Activated CD8-positive, alpha-beta T cell treated with anti-CD3 and anti-CD28 coated beads for 36 hours (primary cell): ENCODE measurements at regions of chr6 and their contacts with region 1.

Region 1: GRCh38 chr6:42726485-42727086 is 4.2 kb upstream of the PRPH2 start:
- DNase-seq: peak; percentile 88
- ATAC-seq: peak; percentile 98
- H3K4me3 Mint-ChIP-seq: peak overlapping the region; percentile 75
- H3K27ac Mint-ChIP-seq: peak overlapping the region; percentile 96
- H3K4me1 Mint-ChIP-seq: peaks cover 16% of the 10 kb centered on the region
- H3K27me3 Mint-ChIP-seq: no peaks in the 10 kb centered on the region
- CTCF ChIP-seq: peak; percentile 94

Region 2: DNA sequence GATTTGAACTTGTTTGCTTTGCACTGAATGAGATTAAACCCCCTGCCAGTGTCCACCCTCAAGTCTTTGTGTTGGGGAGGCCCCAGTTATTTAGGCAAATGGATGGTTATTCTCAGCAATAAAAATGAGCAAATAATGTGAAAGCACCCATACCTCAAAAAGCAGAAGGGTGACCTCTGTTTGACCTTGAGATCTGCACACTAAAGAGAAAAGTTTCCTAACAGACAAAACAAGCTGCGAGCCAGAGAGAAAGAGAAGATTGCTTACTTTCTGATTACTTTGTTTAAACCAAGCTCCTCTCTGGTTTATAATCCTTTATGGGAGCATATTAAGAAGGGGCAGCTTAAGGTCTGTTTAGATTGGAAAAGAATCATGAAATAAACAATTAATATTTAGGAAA is 244.4 kb before region 1 on chr6:
- CTCF ChIA-PET with region 1: no interaction called
- POLR2A ChIA-PET with region 1: no interaction called
- intact Hi-C with region 1: no loop called
- DNase-seq: no peak
- ATAC-seq: no peak
- H3K4me3 Mint-ChIP-seq: no peak overlapping the region
- H3K27ac Mint-ChIP-seq: no peak overlapping the region
- H3K4me1 Mint-ChIP-seq: no peaks in the 10 kb centered on the region
- H3K27me3 Mint-ChIP-seq: no peaks in the 10 kb centered on the region
- CTCF ChIP-seq: no peak

Region 3: DNA sequence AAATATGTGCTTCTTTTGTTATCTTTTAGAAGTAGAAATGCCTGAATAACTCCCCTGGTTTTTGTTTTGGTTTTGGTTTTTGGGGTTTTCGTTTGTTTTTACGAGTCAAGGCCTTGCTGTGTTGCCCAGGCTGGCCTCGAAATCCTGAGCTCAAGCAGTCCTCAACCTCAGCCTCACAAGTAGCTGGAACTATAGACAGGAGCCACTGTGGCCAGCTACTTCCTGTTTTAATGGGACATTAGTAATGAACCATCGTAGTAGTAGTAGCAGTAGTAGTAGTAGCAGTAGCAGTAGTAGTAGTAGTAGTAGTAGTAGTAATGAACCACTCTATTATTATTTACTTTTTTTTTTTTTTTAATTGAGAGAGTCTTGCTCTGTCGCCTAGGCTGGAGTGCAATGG is 96.7 kb before region 1 on chr6:
- CTCF ChIA-PET with region 1: no interaction called
- POLR2A ChIA-PET with region 1: no interaction called
- intact Hi-C with region 1: no loop called
- DNase-seq: peak; percentile 5
- ATAC-seq: peak; percentile 20
- H3K4me3 Mint-ChIP-seq: no peak overlapping the region
- H3K27ac Mint-ChIP-seq: peak overlapping the region; percentile 36
- H3K4me1 Mint-ChIP-seq: peaks cover 4% of the 10 kb centered on the region
- H3K27me3 Mint-ChIP-seq: no peaks in the 10 kb centered on the region
- CTCF ChIP-seq: no peak

Region 4: DNA sequence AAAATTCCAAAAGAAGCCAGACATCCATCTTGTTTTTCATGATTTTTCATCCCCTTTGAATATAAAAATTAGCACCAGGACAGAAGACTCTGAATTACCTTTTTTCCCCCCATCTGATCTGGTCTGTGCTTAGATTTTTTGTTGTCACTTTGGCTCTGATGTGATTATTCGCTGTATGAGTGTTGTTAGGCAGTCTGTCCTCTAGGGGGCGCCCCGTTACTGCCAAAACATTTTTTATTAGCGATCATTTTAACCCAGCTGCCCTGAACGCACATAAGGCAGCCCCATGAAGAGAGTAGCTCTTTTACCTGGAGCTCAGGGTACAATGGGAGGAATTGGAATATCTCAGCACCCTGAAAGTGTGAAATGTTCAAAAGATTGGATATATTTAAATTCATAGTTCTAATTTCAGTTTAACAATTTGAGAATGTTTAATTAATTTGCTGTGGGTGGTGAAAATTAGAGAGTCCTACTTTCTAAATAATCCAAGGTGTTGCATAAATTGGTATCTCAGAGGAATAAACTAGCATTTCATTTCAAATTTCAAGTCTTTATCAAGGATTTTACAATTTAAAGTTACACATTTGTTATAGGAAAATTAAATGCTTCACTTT is 64.9 kb before region 1 on chr6:
- CTCF ChIA-PET with region 1: interaction called, 89 read pairs
- POLR2A ChIA-PET with region 1: interaction called, 8 read pairs
- intact Hi-C with region 1: loop called (anchors 2 kb)
- DNase-seq: peak; percentile 93
- ATAC-seq: peak; percentile 91
- H3K4me3 Mint-ChIP-seq: no peak overlapping the region
- H3K27ac Mint-ChIP-seq: peak overlapping the region; percentile 37
- H3K4me1 Mint-ChIP-seq: no peaks in the 10 kb centered on the region
- H3K27me3 Mint-ChIP-seq: no peaks in the 10 kb centered on the region
- CTCF ChIP-seq: peak; percentile 91

Region 5: GRCh38 chr6:42674780-42675179 is 51.8 kb before region 1 on chr6:
- CTCF ChIA-PET with region 1: interaction called, 10 read pairs
- POLR2A ChIA-PET with region 1: interaction called, 3 read pairs
- intact Hi-C with region 1: no loop called
- DNase-seq: no peak
- ATAC-seq: no peak
- H3K4me3 Mint-ChIP-seq: no peak overlapping the region
- H3K27ac Mint-ChIP-seq: no peak overlapping the region
- H3K4me1 Mint-ChIP-seq: peaks cover 11% of the 10 kb centered on the region
- H3K27me3 Mint-ChIP-seq: no peaks in the 10 kb centered on the region
- CTCF ChIP-seq: no peak

Region 6: GRCh38 chr6:42692137-42692911 is 34.3 kb before region 1 on chr6:
- CTCF ChIA-PET with region 1: interaction called, 29 read pairs
- POLR2A ChIA-PET with region 1: interaction called, 3 read pairs
- intact Hi-C with region 1: no loop called
- DNase-seq: peak; percentile 64
- ATAC-seq: peak; percentile 79
- H3K4me3 Mint-ChIP-seq: no peak overlapping the region
- H3K27ac Mint-ChIP-seq: peak overlapping the region; percentile 93
- H3K4me1 Mint-ChIP-seq: peaks cover 38% of the 10 kb centered on the region
- H3K27me3 Mint-ChIP-seq: no peaks in the 10 kb centered on the region
- CTCF ChIP-seq: no peak

Region 7: GRCh38 chr6:42714098-42714761 is 12.4 kb before region 1 on chr6:
- CTCF ChIA-PET with region 1: interaction called, 13 read pairs
- POLR2A ChIA-PET with region 1: no interaction called
- intact Hi-C with region 1: no loop called
- DNase-seq: no peak
- ATAC-seq: no peak
- H3K4me3 Mint-ChIP-seq: no peak overlapping the region
- H3K27ac Mint-ChIP-seq: no peak overlapping the region
- H3K4me1 Mint-ChIP-seq: peaks cover 3% of the 10 kb centered on the region
- H3K27me3 Mint-ChIP-seq: no peaks in the 10 kb centered on the region
- CTCF ChIP-seq: no peak

Region 8: DNA sequence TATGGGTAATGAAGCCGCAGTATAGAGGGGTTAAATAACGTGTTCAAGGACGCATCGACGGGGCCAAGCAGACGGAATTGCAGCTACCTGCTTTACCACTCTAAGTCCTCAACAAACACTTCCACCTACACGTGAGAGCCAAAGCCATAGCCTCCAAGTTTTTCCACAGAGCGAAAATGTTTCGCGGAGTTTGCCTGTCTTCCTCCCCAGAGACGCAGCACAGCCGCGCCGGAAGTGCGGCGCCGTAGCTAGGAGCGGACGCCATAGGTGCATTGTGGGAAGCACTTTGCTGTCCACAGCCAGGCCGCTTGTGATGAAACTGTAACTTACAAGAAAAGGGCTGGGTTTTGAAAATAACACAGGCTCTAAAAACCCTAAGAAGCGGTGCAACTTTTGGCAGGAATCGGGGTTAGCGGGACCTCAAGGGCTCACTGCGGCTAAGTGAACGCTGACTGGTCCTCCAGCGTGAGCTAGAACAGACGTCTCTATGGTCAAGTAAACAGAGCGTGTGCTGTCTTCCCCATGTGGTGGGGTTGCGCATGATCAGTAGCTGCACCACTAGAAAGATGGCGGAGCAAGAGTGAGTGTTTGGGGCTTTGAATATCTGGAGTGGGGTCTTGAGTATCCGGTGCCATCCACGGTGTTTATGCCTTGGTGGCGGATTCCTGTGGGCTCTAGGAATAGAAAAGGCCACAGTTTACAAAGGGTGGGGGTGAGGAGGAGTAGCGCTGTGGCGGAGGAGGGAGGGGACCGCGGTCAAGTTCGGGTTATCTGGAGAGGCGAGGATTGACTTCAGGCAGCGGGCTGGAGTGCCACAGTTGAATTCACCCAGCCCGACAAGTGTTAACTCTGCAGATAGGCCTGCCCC is 153.0 kb after region 1 on chr6 and contains the start of gene RPL7L1:
- CTCF ChIA-PET with region 1: interaction called, 19 read pairs
- POLR2A ChIA-PET with region 1: interaction called, 7 read pairs
- intact Hi-C with region 1: no loop called
- DNase-seq: peak; percentile 87
- ATAC-seq: peak; percentile 96
- H3K4me3 Mint-ChIP-seq: peak within 1 kb of the TSS; percentile 98
- H3K27ac Mint-ChIP-seq: peak within 1 kb of the TSS; percentile 100
- H3K4me1 Mint-ChIP-seq: peaks cover 18% of the 10 kb centered on the region
- H3K27me3 Mint-ChIP-seq: no peaks in the 10 kb centered on the region
- CTCF ChIP-seq: no peak
- total RNA-seq, gene RPL7L1: 135 to 137 TPM